Activated naive CD8-positive, alpha-beta T cell treated with anti-CD3 and anti-CD28 coated beads, Interleukin-2, amount 10 ng/mL, durations not matched to agents 7 days and 5 days (primary cell): ENCODE measurements at regions of chr16 and their contacts with region 1.

Region 1: DNA sequence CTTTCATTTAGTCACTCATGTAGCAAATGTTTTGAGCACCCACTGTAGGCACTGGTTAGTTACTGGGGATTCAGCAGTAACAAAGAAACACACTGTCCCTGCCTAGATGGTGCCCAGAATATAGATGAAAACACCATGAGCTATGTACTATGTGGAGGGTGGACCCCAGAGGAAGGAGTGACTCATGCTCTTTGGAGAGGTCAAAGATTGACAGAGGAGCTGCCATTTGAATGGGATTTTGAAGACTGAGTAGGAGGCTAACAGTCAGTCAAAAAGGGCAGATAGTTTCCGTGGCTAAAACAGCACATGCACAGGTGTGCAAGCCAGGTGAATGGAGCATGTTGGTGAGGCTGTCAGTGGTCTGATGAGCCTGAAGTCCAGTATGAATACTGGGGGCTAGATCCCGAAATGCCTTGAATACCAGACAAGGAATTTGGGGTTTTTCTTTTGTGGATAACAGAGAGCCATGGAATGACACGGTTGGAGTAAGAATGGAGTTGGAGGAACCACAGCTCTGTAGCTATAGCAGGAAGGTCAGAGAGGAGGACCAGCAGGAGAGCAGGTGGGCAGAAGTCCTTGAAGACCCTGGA is 6.1 kb downstream of the IL21R start:
- DNase-seq: no peak
- ATAC-seq: peak; percentile 46
- H3K4me3 Mint-ChIP-seq: peak overlapping the region; percentile 58
- H3K27ac Mint-ChIP-seq: peak overlapping the region; percentile 94
- H3K4me1 Mint-ChIP-seq: peaks cover 65% of the 10 kb centered on the region
- H3K27me3 Mint-ChIP-seq: no peaks in the 10 kb centered on the region

Region 2: DNA sequence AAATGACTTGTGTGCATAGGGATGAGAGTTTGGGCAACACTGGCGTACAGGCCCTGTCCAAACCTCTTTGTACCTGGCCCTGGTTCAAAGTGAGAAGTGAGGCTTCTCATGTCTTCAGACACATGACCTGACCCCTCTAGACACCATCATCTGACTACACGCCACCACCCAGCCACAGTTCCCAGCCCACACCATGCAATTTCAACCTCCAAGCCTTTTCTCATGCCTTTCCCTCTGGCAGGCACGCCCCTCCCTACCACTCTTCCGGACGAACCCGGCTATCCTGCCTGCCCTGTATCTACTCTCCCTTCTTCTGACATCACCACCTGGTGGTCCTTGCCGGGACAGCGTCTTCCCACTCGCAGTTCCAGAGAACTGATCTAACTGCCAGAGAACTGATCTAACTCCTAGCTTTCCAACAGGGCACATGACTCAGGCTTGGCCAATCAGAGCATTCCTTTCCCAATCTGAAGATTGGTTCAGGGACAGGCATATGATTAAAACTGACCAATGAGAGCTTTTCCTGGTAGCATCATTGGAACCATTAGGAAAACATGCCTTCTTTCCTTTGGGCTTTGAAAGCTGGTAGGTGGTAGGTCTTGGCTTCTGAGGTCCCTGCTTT is 33.2 kb before region 1 on chr16:
- POLR2A ChIA-PET with region 1: interaction called, 19 read pairs
- DNase-seq: peak; percentile 58
- ATAC-seq: peak; percentile 33
- H3K4me3 Mint-ChIP-seq: no peak overlapping the region
- H3K27ac Mint-ChIP-seq: no peak overlapping the region
- H3K4me1 Mint-ChIP-seq: peaks cover 27% of the 10 kb centered on the region
- H3K27me3 Mint-ChIP-seq: no peaks in the 10 kb centered on the region

Region 3: DNA sequence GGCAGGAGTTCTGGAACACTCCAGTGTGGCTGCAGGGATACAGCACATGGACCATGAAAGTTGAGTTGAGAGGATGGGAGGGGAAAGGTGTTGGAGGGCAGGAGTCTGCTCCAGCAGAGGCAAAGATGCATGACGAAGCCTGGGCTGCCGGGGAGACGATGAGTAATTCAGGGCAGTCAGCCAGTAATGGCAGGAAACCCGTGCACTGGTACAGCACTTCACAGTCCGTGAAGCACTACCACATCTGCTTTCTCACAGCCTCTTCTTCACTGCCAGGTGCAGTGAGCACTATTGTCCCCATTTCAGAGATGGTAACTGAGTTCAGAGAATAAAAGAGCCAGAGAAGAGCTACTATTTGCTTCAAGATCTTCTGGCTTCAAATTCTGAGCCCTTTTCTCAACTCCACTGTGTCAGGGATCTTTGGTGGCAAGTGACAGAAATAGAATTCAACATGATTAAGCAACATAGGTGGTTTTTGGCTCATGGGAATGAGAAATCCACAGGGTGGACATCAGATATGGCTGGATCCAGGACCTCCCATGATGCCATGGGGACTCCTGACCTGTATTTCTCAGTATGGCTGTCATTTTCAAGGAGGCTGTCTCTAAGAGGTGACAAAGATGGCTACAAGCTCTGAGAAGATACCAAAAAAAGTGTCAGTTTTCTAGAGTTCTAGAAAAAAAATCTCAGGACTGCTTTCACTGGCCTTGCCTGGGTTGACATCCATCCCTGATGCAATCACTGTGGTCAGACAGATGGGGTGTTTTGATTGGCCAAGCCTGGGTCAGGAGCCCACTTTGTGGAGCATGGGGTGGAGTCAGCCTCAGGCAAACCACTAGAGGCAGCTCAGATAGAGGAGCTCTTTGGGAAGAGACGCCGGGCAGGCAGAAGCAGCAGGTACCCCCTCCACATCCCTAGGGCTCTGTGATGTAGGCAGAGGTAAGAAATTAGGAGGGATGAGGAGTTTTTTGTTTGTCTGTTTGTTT is 18.6 kb after region 1 on chr16:
- POLR2A ChIA-PET with region 1: interaction called, 23 read pairs
- DNase-seq: peak; percentile 66
- ATAC-seq: peak; percentile 97
- H3K4me3 Mint-ChIP-seq: peak overlapping the region; percentile 71
- H3K27ac Mint-ChIP-seq: peak overlapping the region; percentile 86
- H3K4me1 Mint-ChIP-seq: peaks cover 47% of the 10 kb centered on the region
- H3K27me3 Mint-ChIP-seq: no peaks in the 10 kb centered on the region